A549 (cell line): ENCODE measurements at regions of chr7 and their contacts with region 1.

Region 1: GRCh38 chr7:72493850-72494661 is 81.9 kb upstream of the CALN1 start:
- DNase-seq: peak; percentile 40 to 65
- ATAC-seq: peak; percentile 77 to 80; a peak in 5 of 6 replicates
- H3K4me3 ChIP-seq: no peak overlapping the region
- H3K27ac ChIP-seq: no peak overlapping the region
- H3K4me1 ChIP-seq: no peaks in the 10 kb centered on the region
- CTCF ChIP-seq: peak; percentile 64
- EP300 ChIP-seq: no peak
- POLR2A ChIP-seq: no peak
- RAD21 ChIP-seq: peak; percentile 57 to 58

Region 2: GRCh38 chr7:72467237-72467636 is 26.8 kb before region 1 on chr7:
- CTCF ChIA-PET with region 1: interaction called, 13 read pairs
- POLR2A ChIA-PET with region 1: no interaction called
- DNase-seq: no peak
- ATAC-seq: no peak; a peak in 1 of 6 replicates
- H3K4me3 ChIP-seq: no peak overlapping the region
- H3K27ac ChIP-seq: no peak overlapping the region
- H3K4me1 ChIP-seq: no peaks in the 10 kb centered on the region
- CTCF ChIP-seq: no peak
- EP300 ChIP-seq: no peak
- POLR2A ChIP-seq: no peak
- RAD21 ChIP-seq: no peak

Region 3: DNA sequence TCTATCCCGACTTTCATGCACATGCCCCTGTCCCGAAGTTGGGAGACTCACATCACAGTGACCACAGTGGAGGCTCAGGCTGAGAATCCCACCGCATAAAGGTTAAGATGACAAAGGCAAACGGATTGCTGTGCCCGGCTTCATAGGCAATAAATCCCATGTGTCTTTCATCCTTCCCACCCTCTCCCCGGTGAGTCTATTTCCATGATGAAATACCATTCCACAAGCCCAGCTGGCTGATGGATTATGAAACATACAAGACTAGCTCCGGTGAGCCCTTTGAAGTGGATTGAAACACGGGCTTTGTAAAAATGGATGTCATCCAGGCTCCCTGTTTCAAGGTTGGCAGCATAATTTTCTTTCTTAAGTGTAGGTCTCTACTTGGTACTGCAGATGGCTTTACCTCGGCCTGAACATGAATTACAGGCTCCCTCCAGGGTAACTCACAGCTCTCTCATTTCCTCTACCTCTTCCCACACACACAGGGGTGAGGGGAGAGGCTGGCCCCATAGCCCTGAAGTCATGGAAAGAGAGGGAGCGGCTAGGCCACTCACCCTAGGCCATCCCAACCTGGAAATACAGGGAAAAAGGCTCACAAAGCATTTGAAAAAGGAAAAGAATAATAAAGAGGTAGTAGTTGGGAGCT is 10.1 kb after region 1 on chr7:
- CTCF ChIA-PET with region 1: interaction called, 30 read pairs
- POLR2A ChIA-PET with region 1: no interaction called
- DNase-seq: no peak
- ATAC-seq: peak in 1 of 2 experiments; percentile 47; a peak in 1 of 6 replicates
- H3K4me3 ChIP-seq: no peak overlapping the region
- H3K27ac ChIP-seq: no peak overlapping the region
- H3K4me1 ChIP-seq: no peaks in the 10 kb centered on the region
- CTCF ChIP-seq: no peak
- EP300 ChIP-seq: no peak
- POLR2A ChIP-seq: no peak
- RAD21 ChIP-seq: no peak